Right cardiac atrium (tissue), 5 donors: ENCODE measurements at regions of chr19 and their contacts with region 1.

Region 1: GRCh38 chr19:5057861-5058260 is 88.9 kb downstream of the KDM4B start:
- DNase-seq: peak in 2 of 3 donors; percentile 52 to 70
- ATAC-seq: peak in 1 of 2 donors; percentile 8
- H3K4me3 ChIP-seq: no peak overlapping the region
- H3K27ac ChIP-seq: no peak overlapping the region
- H3K4me1 ChIP-seq: no peaks in the 10 kb centered on the region
- H3K27me3 ChIP-seq: no peaks in the 10 kb centered on the region

Region 2: GRCh38 chr19:5138606-5139582 is 81.0 kb after region 1 on chr19:
- intact Hi-C with region 1: loop called in 2 of 4 experiments (anchors 5 to 10 kb)
- DNase-seq: peak; percentile 59 to 86 (median 84)
- ATAC-seq: peak; percentile 9 to 68
- H3K4me3 ChIP-seq: no peak overlapping the region
- H3K27ac ChIP-seq: no peak overlapping the region
- H3K4me1 ChIP-seq: no peaks in the 10 kb centered on the region
- H3K27me3 ChIP-seq: no peaks in the 10 kb centered on the region